ENCODE measurements at regions of chr7 and their contacts with region 1.

Region 1: GRCh38 chr7:116236020-116236630 is 25.8 kb downstream of the TES start:
- DNase-seq: peak; percentile 50 to 65 (median 62)
- H3K4me3 ChIP-seq: no peak overlapping the region
- H3K4me3 Mint-ChIP-seq: peak overlapping the region in 4 of 8 donors; percentile 19 to 52 (median 24)
- H3K27ac ChIP-seq: no peak overlapping the region
- H3K27ac Mint-ChIP-seq: peak overlapping the region; percentile 4 to 84 (median 63)
- H3K4me1 ChIP-seq: peaks cover 50% of the 10 kb centered on the region
- H3K4me1 Mint-ChIP-seq: peaks cover 53 to 88% (median 54%) of the 10 kb centered on the region in 4 donors
- H3K27me3 ChIP-seq: no peaks in the 10 kb centered on the region
- H3K27me3 Mint-ChIP-seq: no peaks in the 10 kb centered on the region

Region 2: GRCh38 chr7:116138202-116138801 is 97.8 kb before region 1 on chr7:
- CTCF ChIA-PET with region 1: interaction called, 4 read pairs
- POLR2A ChIA-PET with region 1: no interaction called
- intact Hi-C with region 1: loop called (anchors 1 kb)
- DNase-seq: peak in 4 of 5 donors; percentile 31 to 40 (median 34)
- H3K4me3 ChIP-seq: no peak overlapping the region
- H3K4me3 Mint-ChIP-seq: no peak overlapping the region
- H3K27ac ChIP-seq: no peak overlapping the region
- H3K27ac Mint-ChIP-seq: no peak overlapping the region
- H3K4me1 ChIP-seq: peaks cover 3% of the 10 kb centered on the region
- H3K4me1 Mint-ChIP-seq: peaks cover 5 to 10% (median 6%) of the 10 kb centered on the region in 4 donors
- H3K27me3 ChIP-seq: no peaks in the 10 kb centered on the region
- H3K27me3 Mint-ChIP-seq: peaks cover 2 to 7% of the 10 kb centered on the region in 2 donors

Region 3: GRCh38 chr7:116180302-116180701 is 55.8 kb before region 1 on chr7:
- CTCF ChIA-PET with region 1: interaction called, 409 read pairs
- POLR2A ChIA-PET with region 1: interaction called, 20 read pairs
- intact Hi-C with region 1: loop called (anchors 1 kb)
- DNase-seq: peak; percentile 55 to 67 (median 63)
- H3K4me3 ChIP-seq: no peak overlapping the region
- H3K4me3 Mint-ChIP-seq: no peak overlapping the region
- H3K27ac ChIP-seq: no peak overlapping the region
- H3K27ac Mint-ChIP-seq: peak overlapping the region in 1 of 7 donors; percentile 53
- H3K4me1 ChIP-seq: no peaks in the 10 kb centered on the region
- H3K4me1 Mint-ChIP-seq: peaks cover 0 to 4% (median 4%) of the 10 kb centered on the region in 4 donors
- H3K27me3 ChIP-seq: no peaks in the 10 kb centered on the region
- H3K27me3 Mint-ChIP-seq: peaks cover 0 to 6% of the 10 kb centered on the region in 2 donors

Region 4: DNA sequence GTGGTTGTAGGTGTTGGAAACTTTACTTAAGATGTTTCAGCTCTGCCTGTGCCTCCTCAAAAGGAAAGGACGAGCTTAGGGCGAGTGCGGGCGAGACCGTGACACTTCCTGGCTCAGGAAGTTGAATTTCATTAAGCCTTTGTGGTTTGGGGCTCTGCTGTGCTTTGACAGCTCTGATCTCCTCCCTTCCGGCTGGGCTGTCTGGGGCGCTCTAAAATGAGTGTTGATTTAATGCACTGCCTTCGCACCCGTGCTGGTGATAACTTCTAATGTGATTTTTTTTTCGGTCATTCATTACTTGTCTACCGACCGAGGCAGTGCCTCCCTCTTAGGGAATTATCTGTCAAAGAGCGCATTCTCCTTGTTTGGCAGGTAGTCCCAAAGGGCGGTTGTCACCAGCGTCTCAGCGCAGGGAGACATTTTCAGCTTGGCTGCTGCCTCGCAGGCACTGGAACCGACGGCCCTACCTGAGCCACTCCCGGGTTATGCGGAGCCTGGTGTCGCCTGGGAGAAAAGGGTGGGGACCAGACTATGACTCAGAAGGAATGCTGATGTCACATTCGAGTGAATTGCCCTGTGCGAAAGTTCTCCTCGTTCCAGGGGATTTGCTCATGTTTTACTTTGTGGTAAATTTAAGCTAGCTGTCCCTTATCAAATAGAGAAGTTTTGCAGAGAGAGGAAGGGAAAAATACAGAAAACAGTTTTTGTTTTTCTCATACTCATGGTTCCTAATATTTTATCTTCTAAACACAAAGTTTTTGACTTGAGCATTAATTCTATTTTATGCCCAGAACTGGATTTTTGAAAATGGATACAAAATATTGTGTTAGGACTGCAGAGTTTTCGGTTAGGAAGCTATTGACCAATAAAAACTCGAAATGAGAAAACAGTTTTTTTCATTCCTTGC is 24.9 kb before region 1 on chr7:
- CTCF ChIA-PET with region 1: interaction called, 118 read pairs
- POLR2A ChIA-PET with region 1: interaction called, 96 read pairs
- intact Hi-C with region 1: loop called (anchors 1 kb)
- DNase-seq: peak; percentile 80 to 93 (median 85)
- H3K4me3 ChIP-seq: peak overlapping the region; percentile 62 to 82
- H3K4me3 Mint-ChIP-seq: peak overlapping the region; percentile 93 to 98 (median 98)
- H3K27ac ChIP-seq: peak overlapping the region; percentile 92
- H3K27ac Mint-ChIP-seq: peak overlapping the region; percentile 96 to 99 (median 98)
- H3K4me1 ChIP-seq: peaks cover 56% of the 10 kb centered on the region
- H3K4me1 Mint-ChIP-seq: peaks cover 49 to 62% (median 56%) of the 10 kb centered on the region in 4 donors
- H3K27me3 ChIP-seq: no peaks in the 10 kb centered on the region
- H3K27me3 Mint-ChIP-seq: no peaks in the 10 kb centered on the region

Region 5: GRCh38 chr7:116249708-116250553 is 13.8 kb after region 1 on chr7:
- CTCF ChIA-PET with region 1: interaction called, 40 read pairs
- POLR2A ChIA-PET with region 1: interaction called, 3 read pairs
- intact Hi-C with region 1: loop called (anchors 2 kb)
- DNase-seq: no peak
- H3K4me3 ChIP-seq: no peak overlapping the region
- H3K4me3 Mint-ChIP-seq: peak overlapping the region in 1 of 8 donors; percentile 26
- H3K27ac ChIP-seq: no peak overlapping the region
- H3K27ac Mint-ChIP-seq: peak overlapping the region in 6 of 7 donors; percentile 43 to 86 (median 62)
- H3K4me1 ChIP-seq: peaks cover 3% of the 10 kb centered on the region
- H3K4me1 Mint-ChIP-seq: peaks cover 32 to 42% (median 36%) of the 10 kb centered on the region in 4 donors
- H3K27me3 ChIP-seq: no peaks in the 10 kb centered on the region
- H3K27me3 Mint-ChIP-seq: no peaks in the 10 kb centered on the region

Region 6: GRCh38 chr7:116354546-116355408 is 118.7 kb after region 1 on chr7:
- CTCF ChIA-PET with region 1: no interaction called
- POLR2A ChIA-PET with region 1: no interaction called
- intact Hi-C with region 1: no loop called
- DNase-seq: no peak
- H3K4me3 ChIP-seq: no peak overlapping the region
- H3K4me3 Mint-ChIP-seq: no peak overlapping the region
- H3K27ac ChIP-seq: no peak overlapping the region
- H3K27ac Mint-ChIP-seq: no peak overlapping the region
- H3K4me1 ChIP-seq: no peaks in the 10 kb centered on the region
- H3K4me1 Mint-ChIP-seq: no peaks in the 10 kb centered on the region
- H3K27me3 ChIP-seq: no peaks in the 10 kb centered on the region
- H3K27me3 Mint-ChIP-seq: peaks cover 2 to 7% of the 10 kb centered on the region in 2 donors

Region 7: DNA sequence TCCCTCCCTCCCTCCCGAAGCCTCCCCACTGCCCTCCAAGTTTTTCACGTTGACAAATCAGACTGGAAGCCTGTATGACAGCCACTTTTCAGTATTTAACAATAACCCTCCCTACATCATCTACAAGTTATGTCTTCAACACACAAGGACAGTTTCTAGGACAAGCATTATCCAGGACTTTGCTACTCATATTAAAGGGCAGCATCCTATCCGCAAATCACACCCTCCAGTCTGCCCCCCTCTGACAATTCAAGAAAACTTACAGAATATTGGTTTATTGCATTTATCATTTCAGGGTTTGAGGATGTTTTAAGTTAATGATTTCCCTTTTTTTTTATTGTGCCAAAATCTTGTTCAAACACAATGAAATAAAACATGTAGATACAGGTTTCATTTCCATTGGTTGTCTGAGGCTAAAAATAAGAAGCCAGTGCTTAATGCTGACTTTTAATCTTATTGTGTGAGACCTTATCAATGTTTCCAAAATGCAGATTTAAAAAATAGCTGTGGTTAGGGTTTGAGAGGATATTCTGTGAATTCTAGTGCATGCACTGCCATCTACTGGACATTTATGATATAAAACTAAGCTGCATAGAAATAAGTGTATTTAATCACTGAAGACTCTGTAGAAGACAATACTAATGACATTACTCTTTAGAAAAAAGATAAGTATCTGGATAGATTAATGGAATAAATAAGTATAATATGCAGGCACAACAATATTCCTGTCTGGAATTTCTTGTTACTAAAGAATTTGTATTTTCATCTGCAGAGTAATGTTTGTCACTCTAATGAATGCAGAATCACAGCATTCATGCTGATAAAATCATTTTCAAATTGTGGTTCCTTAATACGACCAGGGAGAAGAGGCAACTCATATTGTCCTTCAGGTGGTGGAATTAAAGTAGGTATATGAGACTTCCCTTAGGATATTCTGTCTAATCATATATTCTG is 352.8 kb after region 1 on chr7:
- CTCF ChIA-PET with region 1: interaction called, 5 read pairs
- POLR2A ChIA-PET with region 1: no interaction called
- intact Hi-C with region 1: loop called (anchors 5 kb)
- DNase-seq: peak in 4 of 5 donors; percentile 17 to 38 (median 32)
- H3K4me3 ChIP-seq: no peak overlapping the region
- H3K4me3 Mint-ChIP-seq: no peak overlapping the region
- H3K27ac ChIP-seq: no peak overlapping the region
- H3K27ac Mint-ChIP-seq: no peak overlapping the region
- H3K4me1 ChIP-seq: peaks cover 6% of the 10 kb centered on the region
- H3K4me1 Mint-ChIP-seq: peaks cover 10 to 22% (median 16%) of the 10 kb centered on the region in 4 donors
- H3K27me3 ChIP-seq: peaks cover 9% of the 10 kb centered on the region
- H3K27me3 Mint-ChIP-seq: peaks cover 17 to 22% of the 10 kb centered on the region in 2 donors

Region 8: DNA sequence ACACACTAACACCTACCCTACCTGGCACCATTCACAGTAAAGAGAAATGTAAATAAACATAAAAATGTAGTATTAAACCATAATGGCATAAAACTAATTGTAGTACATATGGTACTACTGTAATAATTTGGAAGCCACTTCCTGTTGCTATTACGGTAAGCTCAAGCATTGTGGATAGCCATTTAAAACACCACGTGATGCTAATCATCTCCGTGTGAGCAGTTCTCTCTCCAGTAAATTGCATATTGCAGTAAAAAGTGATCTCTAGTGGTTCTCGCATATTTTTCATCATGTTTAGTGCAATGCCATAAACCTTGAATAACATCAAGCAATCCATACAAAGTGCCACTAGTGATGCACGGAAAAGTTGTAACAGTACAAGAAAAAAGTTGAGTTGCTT is 1319.1 kb after region 1 on chr7:
- CTCF ChIA-PET with region 1: no interaction called
- POLR2A ChIA-PET with region 1: no interaction called
- intact Hi-C with region 1: no loop called
- DNase-seq: no peak
- H3K4me3 ChIP-seq: no peak overlapping the region
- H3K4me3 Mint-ChIP-seq: no peak overlapping the region
- H3K27ac ChIP-seq: no peak overlapping the region
- H3K27ac Mint-ChIP-seq: no peak overlapping the region
- H3K4me1 ChIP-seq: no peaks in the 10 kb centered on the region
- H3K4me1 Mint-ChIP-seq: no peaks in the 10 kb centered on the region
- H3K27me3 ChIP-seq: no peaks in the 10 kb centered on the region
- H3K27me3 Mint-ChIP-seq: no peaks in the 10 kb centered on the region